ENCODE measurements at regions of chr4 and their contacts with region 1.

Region 1: GRCh38 chr4:143406523-143406922 is 69.8 kb downstream of the GAB1 start:
- DNase-seq: no peak
- ATAC-seq: no peak
- H3K4me3 ChIP-seq: no peak overlapping the region
- H3K27ac ChIP-seq: no peak overlapping the region
- H3K4me1 ChIP-seq: peaks cover 30% of the 10 kb centered on the region
- H3K27me3 ChIP-seq: peaks cover 0 to 2% of the 10 kb centered on the region in 2 experiments; a peak in 1 of 4 replicates
- CTCF ChIP-seq: no peak
- EP300 ChIP-seq: no peak
- POLR2A ChIP-seq: no peak
- RAD21 ChIP-seq: no peak

Region 2: GRCh38 chr4:143335979-143336780 is 70.3 kb before region 1 on chr4:
- CTCF ChIA-PET with region 1: interaction called, 7 read pairs
- POLR2A ChIA-PET with region 1: interaction called, 12 read pairs
- RAD21 ChIA-PET with region 1: interaction called, 8 read pairs
- SMC1A ChIA-PET with region 1: interaction called, 6 read pairs
- in situ Hi-C with region 1: no loop called
- intact Hi-C with region 1: no loop called
- DNase-seq: no peak
- ATAC-seq: peak; percentile 66
- H3K4me3 ChIP-seq: peak overlapping the region; percentile 87
- H3K27ac ChIP-seq: no peak overlapping the region
- H3K4me1 ChIP-seq: no peaks in the 10 kb centered on the region; the same call in 1 of the 2 replicates
- H3K27me3 ChIP-seq: 0 out of 4 replicates have a peak, but pooled peaks cover 1 to 3% of the 10 kb centered on the region in 2 experiments
- CTCF ChIP-seq: no peak
- EP300 ChIP-seq: no peak
- POLR2A ChIP-seq: peak; percentile 41; the same call in 1 of the 2 replicates
- RAD21 ChIP-seq: no peak

Region 3: DNA sequence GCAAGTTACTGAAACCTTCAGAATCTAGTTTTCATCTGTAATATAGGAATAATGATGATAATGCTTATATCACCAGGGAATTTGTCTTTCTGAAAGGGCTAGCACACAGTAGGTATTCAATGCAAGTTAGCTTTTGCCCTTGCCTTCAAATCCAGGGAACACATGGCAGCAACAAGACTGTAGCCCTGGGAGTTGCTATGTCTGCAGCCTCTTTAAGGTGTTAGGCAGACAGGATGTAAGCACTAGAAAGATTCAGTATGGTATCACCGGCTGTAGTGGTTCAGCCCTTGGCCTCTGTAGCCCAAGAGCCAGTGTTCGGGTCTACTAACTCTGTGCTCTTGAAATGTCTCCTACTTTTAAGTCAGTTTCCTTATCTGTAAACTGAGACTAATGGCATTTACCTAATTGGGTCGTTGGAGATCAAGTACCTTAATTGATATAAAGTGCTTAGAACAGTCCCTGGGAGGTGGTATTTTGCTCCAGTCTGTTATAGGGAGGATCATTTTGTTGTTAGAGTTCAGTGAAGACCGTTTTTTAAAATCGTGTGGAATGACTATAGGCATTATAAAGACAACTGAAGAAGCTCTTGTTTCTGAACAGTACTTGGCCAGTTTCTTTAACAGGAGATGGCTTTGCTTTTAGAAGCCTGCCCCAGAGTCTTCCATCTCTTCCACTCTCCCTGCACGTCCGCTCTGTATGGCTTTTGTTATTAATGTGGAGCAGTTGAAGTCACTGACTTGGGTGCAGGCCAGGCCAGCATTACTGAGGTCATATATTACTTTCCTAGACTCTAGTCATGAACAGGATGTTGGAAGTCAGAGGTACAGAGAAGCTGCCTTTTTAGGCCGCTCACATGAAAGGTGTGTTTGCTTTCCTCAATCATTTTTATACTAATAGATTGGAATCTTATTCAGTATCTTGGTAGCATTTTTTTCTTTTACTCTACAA is 25.1 kb before region 1 on chr4:
- CTCF ChIA-PET with region 1: interaction called, 85 read pairs
- POLR2A ChIA-PET with region 1: interaction called, 17 read pairs
- RAD21 ChIA-PET with region 1: interaction called, 87 read pairs
- SMC1A ChIA-PET with region 1: interaction called, 95 read pairs
- in situ Hi-C with region 1: no loop called
- intact Hi-C with region 1: no loop called
- DNase-seq: no peak
- ATAC-seq: peak; percentile 67
- H3K4me3 ChIP-seq: no peak overlapping the region
- H3K27ac ChIP-seq: no peak overlapping the region
- H3K4me1 ChIP-seq: peaks cover 33% of the 10 kb centered on the region
- H3K27me3 ChIP-seq: no peaks in the 10 kb centered on the region
- CTCF ChIP-seq: no peak
- EP300 ChIP-seq: no peak
- POLR2A ChIP-seq: no peak
- RAD21 ChIP-seq: no peak

Region 4: GRCh38 chr4:143389579-143390195 is 16.8 kb before region 1 on chr4:
- CTCF ChIA-PET with region 1: interaction called, 33 read pairs
- POLR2A ChIA-PET with region 1: interaction called, 4 read pairs
- RAD21 ChIA-PET with region 1: interaction called, 8 read pairs
- SMC1A ChIA-PET with region 1: interaction called, 50 read pairs
- in situ Hi-C with region 1: no loop called
- intact Hi-C with region 1: no loop called
- DNase-seq: no peak
- ATAC-seq: no peak
- H3K4me3 ChIP-seq: no peak overlapping the region
- H3K27ac ChIP-seq: no peak overlapping the region
- H3K4me1 ChIP-seq: no peaks in the 10 kb centered on the region
- H3K27me3 ChIP-seq: no peaks in the 10 kb centered on the region
- CTCF ChIP-seq: no peak
- EP300 ChIP-seq: no peak
- POLR2A ChIP-seq: no peak
- RAD21 ChIP-seq: no peak

Region 5: GRCh38 chr4:143473334-143474126 is 67.0 kb after region 1 on chr4:
- CTCF ChIA-PET with region 1: interaction called, 4 read pairs
- POLR2A ChIA-PET with region 1: no interaction called
- RAD21 ChIA-PET with region 1: interaction called, 18 read pairs
- SMC1A ChIA-PET with region 1: interaction called, 22 read pairs
- in situ Hi-C with region 1: no loop called
- intact Hi-C with region 1: no loop called
- DNase-seq: no peak
- ATAC-seq: peak; percentile 71
- H3K4me3 ChIP-seq: no peak overlapping the region
- H3K27ac ChIP-seq: no peak overlapping the region
- H3K4me1 ChIP-seq: no peaks in the 10 kb centered on the region
- H3K27me3 ChIP-seq: no peaks in the 10 kb centered on the region; a peak in 1 of 4 replicates
- CTCF ChIP-seq: no peak
- EP300 ChIP-seq: no peak
- POLR2A ChIP-seq: no peak
- RAD21 ChIP-seq: no peak

Region 6: GRCh38 chr4:143513306-143514168 is 107.0 kb after region 1 on chr4 and contains the start of gene SMARCA5:
- CTCF ChIA-PET with region 1: no interaction called
- POLR2A ChIA-PET with region 1: interaction called, 5 read pairs
- RAD21 ChIA-PET with region 1: no interaction called
- SMC1A ChIA-PET with region 1: interaction called, 4 read pairs
- in situ Hi-C with region 1: no loop called
- intact Hi-C with region 1: loop called (anchors 1 kb)
- DNase-seq: peak; percentile 98
- ATAC-seq: peak; percentile 89
- H3K4me3 ChIP-seq: peak within 1 kb of the TSS; percentile 94
- H3K27ac ChIP-seq: peak within 1 kb of the TSS; percentile 88
- H3K4me1 ChIP-seq: no peaks in the 10 kb centered on the region
- H3K27me3 ChIP-seq: no peaks in the 10 kb centered on the region; a peak in 1 of 4 replicates
- CTCF ChIP-seq: no peak
- EP300 ChIP-seq: no peak
- POLR2A ChIP-seq: peak; percentile 93
- RAD21 ChIP-seq: no peak
- polyA plus RNA-seq, gene SMARCA5: 21.7 to 32.2 TPM

Region 7: GRCh38 chr4:143728166-143728565 is 321.6 kb after region 1 on chr4:
- CTCF ChIA-PET with region 1: no interaction called
- POLR2A ChIA-PET with region 1: no interaction called
- RAD21 ChIA-PET with region 1: no interaction called
- SMC1A ChIA-PET with region 1: no interaction called
- in situ Hi-C with region 1: no loop called
- intact Hi-C with region 1: no loop called
- DNase-seq: no peak
- ATAC-seq: no peak
- H3K4me3 ChIP-seq: no peak overlapping the region
- H3K27ac ChIP-seq: no peak overlapping the region
- H3K4me1 ChIP-seq: no peaks in the 10 kb centered on the region
- H3K27me3 ChIP-seq: no peaks in the 10 kb centered on the region
- CTCF ChIP-seq: no peak
- EP300 ChIP-seq: no peak
- POLR2A ChIP-seq: no peak
- RAD21 ChIP-seq: no peak

Measured in GM12878 (cell line).